PC-9 (cell line): ENCODE measurements at regions of chr7 and their contacts with region 1.

Region 1: DNA sequence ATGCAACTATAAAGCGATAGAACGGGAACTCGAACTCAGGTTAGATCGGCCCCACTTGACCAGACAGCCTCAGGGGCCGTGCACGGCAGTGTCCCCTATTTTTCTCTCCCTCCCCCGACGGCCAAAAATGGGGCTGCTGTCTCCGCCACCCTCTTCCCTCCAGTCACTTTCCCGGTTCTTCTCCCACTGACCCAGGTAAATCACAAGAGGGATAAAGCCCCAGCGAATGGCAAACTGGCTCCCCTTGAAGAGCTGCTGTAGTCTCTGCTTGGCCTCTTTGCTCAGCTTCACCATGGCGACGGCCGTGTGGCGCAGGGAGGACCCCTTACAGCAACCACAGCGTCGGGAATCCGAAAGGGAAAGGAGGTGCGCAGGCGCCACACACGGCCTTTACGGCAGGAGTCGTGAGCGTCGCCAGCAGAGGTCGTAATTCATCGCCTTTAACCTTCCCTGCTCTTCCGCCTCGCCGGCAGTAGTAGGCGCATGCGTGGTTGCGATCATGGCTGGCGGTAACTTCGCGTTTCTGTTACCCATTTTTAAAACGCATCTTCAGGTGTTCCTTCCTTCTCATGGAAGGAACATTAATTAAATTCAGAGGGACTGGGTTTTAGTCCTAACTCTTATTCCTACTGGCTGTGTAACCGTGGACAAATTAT is at the start of gene TOMM7:
- DNase-seq: peak; percentile 90 to 94
- H3K4me3 ChIP-seq: peak within 1 kb of the TSS; percentile 99
- H3K27ac ChIP-seq: peak within 1 kb of the TSS; percentile 33
- H3K4me1 ChIP-seq: peaks cover 29% of the 10 kb centered on the region
- H3K27me3 ChIP-seq: no peaks in the 10 kb centered on the region
- CTCF ChIP-seq: peak; percentile 65
- total RNA-seq, gene TOMM7: 588 and 703 TPM in 2 replicates

Region 2: DNA sequence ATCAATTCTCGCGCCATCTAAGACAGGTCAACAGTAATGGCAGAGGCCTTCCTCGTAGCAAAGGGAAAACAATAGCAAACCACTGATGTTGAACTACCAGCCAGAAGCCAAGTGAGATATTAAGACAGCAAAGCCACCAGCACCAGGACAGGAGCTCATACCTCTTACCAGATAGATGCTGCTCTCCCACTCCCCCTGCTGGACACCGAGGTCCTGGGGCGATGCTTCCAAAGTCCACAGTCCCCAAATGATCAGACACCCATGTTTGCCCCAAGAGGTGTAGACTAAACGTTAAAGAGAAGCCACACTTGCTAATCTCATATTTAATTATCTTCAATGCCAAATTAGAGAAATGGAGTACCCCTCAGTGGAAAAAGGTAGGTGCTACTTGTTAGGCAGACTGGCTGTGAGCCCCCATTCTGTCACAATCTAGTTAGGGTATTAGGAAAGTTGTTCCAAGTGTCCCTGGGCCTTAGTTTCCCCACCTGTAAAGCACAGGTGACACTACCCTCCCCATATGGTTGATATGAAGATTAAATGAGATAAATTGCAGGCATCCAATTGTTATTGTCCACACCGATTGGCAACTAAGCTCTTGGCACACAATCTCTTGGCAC is 39.9 kb before region 1 on chr7:
- CTCF ChIA-PET with region 1: interaction called, 4 read pairs
- POLR2A ChIA-PET with region 1: no interaction called
- intact Hi-C with region 1: loop called (anchors 1 kb)
- DNase-seq: peak; percentile 54 to 70
- H3K4me3 ChIP-seq: no peak overlapping the region
- H3K27ac ChIP-seq: no peak overlapping the region
- H3K4me1 ChIP-seq: no peaks in the 10 kb centered on the region; the same call in 1 of the 2 replicates
- H3K27me3 ChIP-seq: no peaks in the 10 kb centered on the region
- CTCF ChIP-seq: peak; percentile 95

Region 3: DNA sequence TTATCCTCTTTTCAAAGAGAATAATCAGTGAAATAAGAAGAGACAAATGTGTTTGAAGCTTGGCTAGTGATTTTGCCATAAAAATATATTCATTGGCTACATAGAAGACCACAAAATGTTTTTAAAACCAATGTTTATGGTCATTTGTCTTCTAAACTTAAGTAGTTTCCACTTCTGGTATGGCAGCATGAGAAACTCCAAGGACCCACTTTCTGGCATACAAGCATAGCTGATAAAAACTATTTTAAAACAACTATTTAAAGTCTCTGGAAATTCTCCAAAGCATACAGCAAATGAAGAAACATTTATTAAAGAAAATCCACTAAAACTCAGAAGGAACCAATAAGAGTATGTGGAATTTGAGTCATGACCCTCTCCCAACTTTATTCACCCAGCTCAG is 89.3 kb after region 1 on chr7:
- CTCF ChIA-PET with region 1: no interaction called
- POLR2A ChIA-PET with region 1: no interaction called
- intact Hi-C with region 1: no loop called
- DNase-seq: no peak
- H3K4me3 ChIP-seq: no peak overlapping the region
- H3K27ac ChIP-seq: no peak overlapping the region
- H3K4me1 ChIP-seq: no peaks in the 10 kb centered on the region
- H3K27me3 ChIP-seq: no peaks in the 10 kb centered on the region
- CTCF ChIP-seq: no peak